Sigmoid colon (tissue), 7 donors: ENCODE measurements at regions of chr20 and their contacts with region 1.

Region 1: DNA sequence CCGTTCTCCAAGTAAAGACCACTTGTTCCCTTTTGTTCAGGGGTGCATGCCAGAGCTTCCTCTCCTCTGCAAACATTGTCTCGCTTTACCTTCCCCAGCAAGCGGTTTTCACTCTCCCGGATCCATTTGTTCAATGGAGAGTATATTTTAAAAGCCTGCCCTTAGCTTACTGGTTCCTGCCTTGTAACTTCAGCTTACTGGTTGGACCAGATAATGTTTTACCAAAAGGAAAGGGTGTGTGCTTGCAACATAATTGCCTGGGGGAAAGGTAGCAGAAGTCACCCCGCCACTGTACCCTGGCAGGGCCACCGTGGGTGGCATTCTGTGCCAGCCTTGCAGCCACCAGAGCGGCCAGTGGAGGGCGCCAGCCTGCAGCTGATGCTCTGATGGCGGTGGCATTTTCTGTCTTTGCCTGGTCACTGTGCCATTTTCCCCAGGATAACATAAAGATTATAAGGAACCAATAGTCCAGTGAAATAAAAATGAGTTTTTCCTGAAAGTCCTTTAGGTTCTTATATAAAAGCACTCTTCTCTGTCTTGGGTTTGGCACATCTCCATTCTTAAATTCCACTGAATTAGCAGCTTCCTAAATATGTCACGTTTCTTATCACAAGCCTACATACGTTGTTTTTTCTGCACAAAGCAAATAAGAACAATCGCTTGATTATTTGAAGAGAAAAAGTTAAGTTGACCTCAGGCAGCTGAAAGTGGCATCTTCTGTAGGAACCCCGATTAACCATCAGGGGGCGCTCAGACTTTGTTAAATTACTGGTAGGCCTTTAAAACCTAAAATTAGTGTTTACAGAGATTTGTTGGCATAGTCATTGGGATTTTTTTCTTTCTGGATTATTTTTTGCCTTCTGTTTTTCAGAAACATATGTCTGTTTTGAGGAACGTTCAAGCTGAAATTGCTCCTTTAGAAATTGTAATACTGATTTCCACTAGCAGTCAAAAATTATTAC is 67.4 kb upstream of the XRN2 start:
- DNase-seq: no peak
- H3K4me3 ChIP-seq: no peak overlapping the region
- H3K27ac ChIP-seq: peak overlapping the region in 2 of 4 donors; percentile 27 to 30
- H3K4me1 ChIP-seq: peaks cover 0 to 13% (median 2%) of the 10 kb centered on the region in 4 donors
- H3K27me3 ChIP-seq: no peaks in the 10 kb centered on the region
- CTCF ChIP-seq: peak; percentile 19 to 73 (median 46)
- EP300 ChIP-seq: no peak
- POLR2A ChIP-seq: no peak

Region 2: DNA sequence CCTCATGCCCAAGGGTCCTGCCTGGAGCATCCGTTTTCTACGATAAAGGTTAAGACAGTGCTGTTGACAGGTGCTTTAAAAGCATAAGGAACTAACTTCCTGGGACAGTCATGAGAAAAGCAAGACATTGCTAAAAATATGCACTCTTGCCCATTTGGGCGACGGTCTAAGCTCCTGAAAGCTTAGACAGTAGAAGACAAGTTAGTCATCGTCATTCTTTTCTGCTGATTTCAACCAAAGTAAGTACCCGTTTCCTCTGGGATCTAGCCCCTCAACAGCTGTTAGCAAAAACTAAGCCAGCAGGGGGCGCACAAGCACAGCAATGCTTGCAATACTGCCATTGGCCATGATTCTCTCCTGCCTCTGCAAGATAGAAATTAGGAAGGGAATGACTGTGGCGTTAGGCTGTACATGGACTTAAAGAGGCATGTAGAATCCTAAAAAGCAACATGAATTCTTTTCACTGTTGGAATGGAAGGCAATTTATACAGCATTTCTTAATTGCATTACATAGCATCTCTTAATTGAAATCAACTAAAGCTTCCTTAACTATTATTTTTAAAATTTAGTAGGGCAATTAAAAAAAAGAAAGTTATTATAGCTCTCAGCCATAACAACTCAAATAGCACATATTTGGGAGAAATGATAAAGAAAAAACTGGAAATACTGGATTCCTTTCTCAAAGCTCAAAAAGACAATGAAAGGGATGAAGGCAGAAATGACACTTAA is 375.5 kb before region 1 on chr20:
- intact Hi-C with region 1: loop called (anchors 5 kb)
- DNase-seq: peak; percentile 88
- H3K4me3 ChIP-seq: no peak overlapping the region
- H3K27ac ChIP-seq: no peak overlapping the region
- H3K4me1 ChIP-seq: no peaks in the 10 kb centered on the region
- H3K27me3 ChIP-seq: peaks cover 0 to 22% (median 4%) of the 10 kb centered on the region in 3 donors
- CTCF ChIP-seq: peak; percentile 77 to 92 (median 86)
- EP300 ChIP-seq: no peak
- POLR2A ChIP-seq: no peak

Region 3: GRCh38 chr20:21361266-21361665 is 125.5 kb after region 1 on chr20:
- intact Hi-C with region 1: loop called (anchors 10 kb)
- DNase-seq: no peak
- H3K4me3 ChIP-seq: no peak overlapping the region
- H3K27ac ChIP-seq: no peak overlapping the region
- H3K4me1 ChIP-seq: peaks cover 0 to 29% (median 8%) of the 10 kb centered on the region in 4 donors
- H3K27me3 ChIP-seq: no peaks in the 10 kb centered on the region
- CTCF ChIP-seq: no peak
- EP300 ChIP-seq: no peak
- POLR2A ChIP-seq: no peak